ENCODE measurements at regions of chr1 and their contacts with region 1.

Region 1: GRCh38 chr1:161549652-161550051 is at the start of gene FCGR3A:
- DNase-seq: no peak
- ATAC-seq: no peak
- H3K4me3 Mint-ChIP-seq: no peak within 1 kb of the TSS
- H3K27ac Mint-ChIP-seq: no peak within 1 kb of the TSS
- H3K4me1 Mint-ChIP-seq: peaks cover 13% of the 10 kb centered on the region
- H3K27me3 Mint-ChIP-seq: no peaks in the 10 kb centered on the region
- CTCF ChIP-seq: no peak
- total RNA-seq, gene FCGR3A: 0.24 and 0.47 TPM in 2 replicates

Region 2: DNA sequence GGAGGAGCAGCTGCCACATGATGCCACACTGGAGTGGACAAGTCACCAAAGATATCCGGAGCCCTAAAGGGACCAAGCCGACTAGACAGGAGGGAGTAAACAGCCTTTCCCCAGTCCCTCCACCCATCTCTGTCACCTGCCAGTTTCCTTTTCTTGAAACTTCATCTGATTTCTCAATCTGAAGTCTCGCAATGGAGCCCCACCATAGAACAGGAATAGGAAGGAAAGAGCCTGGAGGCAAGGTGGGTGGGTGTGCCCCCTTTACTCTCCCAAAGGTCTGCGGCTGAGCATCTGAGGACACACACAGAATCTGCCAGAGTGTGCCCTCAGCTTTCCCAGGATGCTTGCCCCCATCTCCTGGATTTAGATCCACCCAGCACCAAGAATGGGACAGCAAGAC is 81.4 kb after region 1 on chr1 and contains the start of gene FCGR3B:
- CTCF ChIA-PET with region 1: no interaction called
- POLR2A ChIA-PET with region 1: no interaction called
- intact Hi-C with region 1: loop called (anchors 2 kb)
- DNase-seq: no peak
- ATAC-seq: no peak
- H3K4me3 Mint-ChIP-seq: no peak within 1 kb of the TSS
- H3K27ac Mint-ChIP-seq: no peak within 1 kb of the TSS
- H3K4me1 Mint-ChIP-seq: peaks cover 9% of the 10 kb centered on the region
- H3K27me3 Mint-ChIP-seq: no peaks in the 10 kb centered on the region
- CTCF ChIP-seq: no peak
- total RNA-seq, gene FCGR3B: not detected in 2 replicates

Region 3: GRCh38 chr1:161792740-161793139 is 243.1 kb after region 1 on chr1:
- CTCF ChIA-PET with region 1: no interaction called
- POLR2A ChIA-PET with region 1: no interaction called
- intact Hi-C with region 1: no loop called
- DNase-seq: no peak
- ATAC-seq: peak; percentile 60
- H3K4me3 Mint-ChIP-seq: no peak overlapping the region
- H3K27ac Mint-ChIP-seq: no peak overlapping the region
- H3K4me1 Mint-ChIP-seq: peaks cover 2% of the 10 kb centered on the region
- H3K27me3 Mint-ChIP-seq: no peaks in the 10 kb centered on the region
- CTCF ChIP-seq: no peak

Region 4: GRCh38 chr1:161872506-161872905 is 322.9 kb after region 1 on chr1:
- CTCF ChIA-PET with region 1: no interaction called
- POLR2A ChIA-PET with region 1: no interaction called
- intact Hi-C with region 1: no loop called
- DNase-seq: no peak
- ATAC-seq: no peak
- H3K4me3 Mint-ChIP-seq: no peak overlapping the region
- H3K27ac Mint-ChIP-seq: no peak overlapping the region
- H3K4me1 Mint-ChIP-seq: no peaks in the 10 kb centered on the region
- H3K27me3 Mint-ChIP-seq: no peaks in the 10 kb centered on the region
- CTCF ChIP-seq: no peak